GM12878 (cell line): ENCODE measurements at regions of chr12 and their contacts with region 1.

Region 1: GRCh38 chr12:9039397-9039977 is 50.1 kb downstream of the KLRG1 start:
- DNase-seq: no peak
- ATAC-seq: peak; percentile 78
- H3K4me3 ChIP-seq: no peak overlapping the region
- H3K27ac ChIP-seq: no peak overlapping the region
- H3K4me1 ChIP-seq: no peaks in the 10 kb centered on the region
- H3K27me3 ChIP-seq: no peaks in the 10 kb centered on the region
- CTCF ChIP-seq: peak; percentile 64 to 79 (median 74)
- EP300 ChIP-seq: no peak
- POLR2A ChIP-seq: no peak
- RAD21 ChIP-seq: peak; percentile 87

Region 2: GRCh38 chr12:8662593-8662992 is 376.9 kb before region 1 on chr12 and contains the start of gene MFAP5:
- CTCF ChIA-PET with region 1: interaction called, 9 read pairs
- POLR2A ChIA-PET with region 1: no interaction called
- RAD21 ChIA-PET with region 1: interaction called, 6 read pairs
- SMC1A ChIA-PET with region 1: interaction called, 7 read pairs
- in situ Hi-C with region 1: no loop called
- intact Hi-C with region 1: loop called (anchors 5 kb)
- DNase-seq: no peak
- ATAC-seq: no peak
- H3K4me3 ChIP-seq: no peak within 1 kb of the TSS
- H3K27ac ChIP-seq: no peak within 1 kb of the TSS
- H3K4me1 ChIP-seq: no peaks in the 10 kb centered on the region
- H3K27me3 ChIP-seq: peaks cover 0 to 5% of the 10 kb centered on the region in 2 experiments; a peak in 2 of 4 replicates
- CTCF ChIP-seq: no peak
- EP300 ChIP-seq: no peak
- POLR2A ChIP-seq: no peak
- RAD21 ChIP-seq: no peak
- polyA plus RNA-seq, gene MFAP5: not detected

Region 3: GRCh38 chr12:8675591-8676036 is 363.9 kb before region 1 on chr12:
- CTCF ChIA-PET with region 1: interaction called, 10 read pairs
- POLR2A ChIA-PET with region 1: no interaction called
- RAD21 ChIA-PET with region 1: interaction called, 7 read pairs
- SMC1A ChIA-PET with region 1: interaction called, 3 read pairs
- in situ Hi-C with region 1: no loop called
- intact Hi-C with region 1: no loop called
- DNase-seq: no peak
- ATAC-seq: peak; percentile 75
- H3K4me3 ChIP-seq: no peak overlapping the region
- H3K27ac ChIP-seq: no peak overlapping the region
- H3K4me1 ChIP-seq: no peaks in the 10 kb centered on the region
- H3K27me3 ChIP-seq: no peaks in the 10 kb centered on the region
- CTCF ChIP-seq: no peak
- EP300 ChIP-seq: peak in 1 of 2 experiments; percentile 65; a peak in 1 of 4 replicates
- POLR2A ChIP-seq: no peak
- RAD21 ChIP-seq: no peak

Region 4: DNA sequence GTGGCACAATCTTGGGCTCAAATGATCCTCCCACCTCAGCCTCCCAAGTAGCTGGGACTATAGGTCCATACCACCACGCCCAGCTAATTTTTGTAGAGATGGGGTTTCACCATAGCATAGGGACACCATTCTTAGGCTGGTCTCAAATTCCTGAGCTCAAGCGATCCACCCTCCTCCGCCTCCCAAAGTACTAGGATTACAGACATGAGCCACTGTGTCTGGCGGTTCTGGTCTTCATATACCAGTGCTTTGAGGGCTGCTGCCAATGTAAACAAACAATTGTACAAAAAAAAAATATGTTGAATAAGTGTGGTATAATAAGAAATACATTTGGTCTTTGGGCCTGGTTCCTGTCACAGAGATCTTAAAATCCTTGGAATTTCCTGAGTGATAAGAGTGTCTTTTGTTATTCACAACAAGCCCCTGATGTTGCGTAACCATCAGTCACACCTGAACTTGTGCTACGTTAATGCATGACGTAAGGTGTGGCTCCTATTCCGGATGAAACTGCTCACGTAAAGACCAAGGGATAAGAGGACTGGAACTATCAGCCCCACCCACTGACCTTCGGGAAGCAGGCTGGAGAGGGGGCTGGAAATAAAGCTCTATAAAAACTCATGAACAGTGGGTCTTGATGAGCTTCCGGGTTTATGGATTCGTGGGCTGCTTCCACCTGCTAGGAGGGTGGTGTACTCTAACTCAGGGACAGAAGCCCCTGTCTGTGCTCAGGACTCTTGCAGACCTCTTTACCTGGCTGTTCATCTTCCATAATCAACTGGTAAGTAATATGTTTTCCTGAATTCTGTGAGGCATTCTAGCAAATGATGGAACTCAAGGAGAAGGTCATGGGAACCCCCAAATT is 358.2 kb before region 1 on chr12:
- CTCF ChIA-PET with region 1: interaction called, 10 read pairs
- POLR2A ChIA-PET with region 1: no interaction called
- RAD21 ChIA-PET with region 1: interaction called, 7 read pairs
- SMC1A ChIA-PET with region 1: interaction called, 6 read pairs
- in situ Hi-C with region 1: no loop called
- intact Hi-C with region 1: loop called (anchors 1 kb)
- DNase-seq: no peak
- ATAC-seq: no peak
- H3K4me3 ChIP-seq: no peak overlapping the region
- H3K27ac ChIP-seq: no peak overlapping the region
- H3K4me1 ChIP-seq: no peaks in the 10 kb centered on the region
- H3K27me3 ChIP-seq: no peaks in the 10 kb centered on the region
- CTCF ChIP-seq: no peak
- EP300 ChIP-seq: no peak
- POLR2A ChIP-seq: no peak
- RAD21 ChIP-seq: no peak

Region 5: DNA sequence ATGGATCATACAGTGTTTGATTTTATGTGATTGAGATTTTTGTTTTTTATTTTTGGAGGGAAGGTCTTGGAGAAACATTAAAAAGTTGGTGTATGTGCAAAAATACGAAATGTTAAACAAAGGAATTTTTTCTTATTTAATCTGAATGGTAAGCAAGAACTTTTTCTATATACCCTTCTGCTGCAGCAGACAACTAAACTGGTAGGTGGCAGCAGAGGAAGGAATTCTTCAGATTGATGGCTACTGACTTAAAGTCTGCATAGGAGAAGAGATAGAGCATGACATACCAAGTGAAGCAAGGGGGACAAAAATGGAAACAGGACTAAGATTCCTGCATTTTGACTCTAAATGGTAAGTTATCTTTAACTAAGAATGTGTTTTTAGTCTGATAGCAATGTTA is 259.1 kb before region 1 on chr12:
- CTCF ChIA-PET with region 1: no interaction called
- POLR2A ChIA-PET with region 1: no interaction called
- RAD21 ChIA-PET with region 1: no interaction called
- SMC1A ChIA-PET with region 1: no interaction called
- in situ Hi-C with region 1: no loop called
- intact Hi-C with region 1: loop called (anchors 5 kb)
- DNase-seq: no peak
- ATAC-seq: 0 out of 3 replicates have a peak, but pooled peaks have one; percentile 42
- H3K4me3 ChIP-seq: no peak overlapping the region
- H3K27ac ChIP-seq: no peak overlapping the region
- H3K4me1 ChIP-seq: no peaks in the 10 kb centered on the region
- H3K27me3 ChIP-seq: no peaks in the 10 kb centered on the region; a peak in 1 of 4 replicates
- CTCF ChIP-seq: peak; percentile 19 to 25 (median 24); a peak in 2 of 6 replicates
- EP300 ChIP-seq: no peak
- POLR2A ChIP-seq: no peak
- RAD21 ChIP-seq: peak; percentile 40; the same call in 1 of the 2 replicates

Region 6: DNA sequence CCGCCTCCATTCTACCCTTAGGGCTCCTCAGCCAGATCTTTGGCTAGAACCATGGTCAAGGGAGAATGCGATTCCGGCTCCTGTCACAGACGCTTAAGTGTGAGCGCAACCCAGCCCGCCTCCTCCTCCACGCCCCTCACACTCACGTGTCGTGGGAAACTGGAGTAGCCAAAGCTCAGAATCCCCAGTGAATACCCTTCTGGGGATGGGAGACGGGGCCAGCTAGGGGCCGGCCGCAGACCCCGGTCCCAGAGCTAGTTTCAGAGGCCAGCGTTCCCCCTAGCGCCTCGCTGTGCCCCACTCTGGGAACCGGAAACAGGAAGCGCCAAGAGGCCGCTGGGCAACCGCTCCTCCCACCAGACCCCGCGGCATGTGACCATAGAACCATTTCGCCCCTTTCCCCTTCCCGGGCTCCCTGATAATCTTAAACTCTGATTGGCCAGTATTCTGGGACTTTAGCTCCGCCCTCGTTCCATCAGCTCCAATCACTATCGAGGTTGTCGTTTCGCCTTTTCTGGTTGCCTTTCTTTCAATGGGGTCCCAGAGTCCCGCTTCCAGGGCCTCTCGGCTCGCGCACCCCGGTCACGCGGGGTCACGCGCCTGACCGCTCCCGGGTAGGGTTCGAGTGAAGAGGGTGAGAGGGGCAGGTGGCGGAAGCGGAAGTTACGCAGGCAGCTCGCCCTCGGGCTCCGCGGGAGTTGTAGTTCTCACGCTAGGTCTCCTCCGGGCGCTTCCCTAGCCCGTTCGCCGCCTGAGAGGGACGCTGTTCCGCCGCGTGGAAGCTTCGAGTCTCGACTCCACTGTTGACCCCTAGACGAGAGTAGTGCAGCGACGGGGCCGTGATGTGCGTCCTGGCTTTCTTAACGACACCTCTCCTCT is 89.9 kb before region 1 on chr12 and contains the start of gene M6PR:
- CTCF ChIA-PET with region 1: interaction called, 30 read pairs
- POLR2A ChIA-PET with region 1: interaction called, 4 read pairs
- RAD21 ChIA-PET with region 1: interaction called, 23 read pairs
- SMC1A ChIA-PET with region 1: interaction called, 36 read pairs
- in situ Hi-C with region 1: loop called (anchors 5 kb)
- intact Hi-C with region 1: loop called (anchors 1 kb)
- DNase-seq: peak; percentile 94
- ATAC-seq: peak; percentile 90
- H3K4me3 ChIP-seq: peak within 1 kb of the TSS; percentile 86
- H3K27ac ChIP-seq: peak within 1 kb of the TSS; percentile 94
- H3K4me1 ChIP-seq: peaks cover 10% of the 10 kb centered on the region; the same call in 1 of the 2 replicates
- H3K27me3 ChIP-seq: no peaks in the 10 kb centered on the region
- CTCF ChIP-seq: peak; percentile 63 to 84 (median 71)
- EP300 ChIP-seq: 0 out of 4 replicates have a peak, but pooled peaks of 1 of the 2 experiments have one; percentile 39
- POLR2A ChIP-seq: peak; percentile 81
- RAD21 ChIP-seq: peak; percentile 67
- polyA plus RNA-seq, gene M6PR: 65.4 to 101 TPM

Region 7: DNA sequence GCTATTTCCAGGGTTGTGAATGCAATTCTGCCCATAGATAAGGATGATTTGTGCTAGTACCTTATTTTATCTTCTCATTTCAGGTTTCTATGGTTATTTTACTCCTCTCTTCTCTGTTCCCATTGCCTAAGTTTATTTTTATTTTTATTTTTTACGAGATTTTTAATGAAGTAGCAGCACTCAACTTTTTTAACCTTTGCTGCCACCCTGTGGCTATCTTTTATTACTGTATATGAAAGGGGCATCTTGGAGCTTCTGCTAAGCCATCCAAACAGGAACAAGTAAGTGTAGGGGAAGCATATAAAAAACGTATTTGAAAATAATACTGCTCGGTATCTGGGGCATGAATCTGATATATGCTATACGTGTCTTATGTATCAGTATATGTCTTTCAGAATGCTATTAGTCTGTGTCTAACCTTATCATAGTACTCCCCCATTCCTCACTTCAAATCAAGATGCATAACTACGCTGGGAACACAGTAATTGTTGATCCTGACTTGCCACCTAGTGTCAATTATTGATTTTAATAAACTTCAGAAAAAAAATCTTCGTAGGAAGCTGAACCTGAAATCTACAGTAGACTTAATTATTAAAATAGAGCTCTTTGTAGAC is 10.1 kb after region 1 on chr12:
- CTCF ChIA-PET with region 1: interaction called, 27 read pairs
- POLR2A ChIA-PET with region 1: no interaction called
- RAD21 ChIA-PET with region 1: interaction called, 4 read pairs
- SMC1A ChIA-PET with region 1: interaction called, 14 read pairs
- in situ Hi-C with region 1: no loop called
- intact Hi-C with region 1: no loop called
- DNase-seq: no peak
- ATAC-seq: peak; percentile 74
- H3K4me3 ChIP-seq: no peak overlapping the region
- H3K27ac ChIP-seq: no peak overlapping the region
- H3K4me1 ChIP-seq: no peaks in the 10 kb centered on the region
- H3K27me3 ChIP-seq: peaks cover 0 to 3% of the 10 kb centered on the region in 2 experiments; a peak in 2 of 4 replicates
- CTCF ChIP-seq: peak; percentile 34 to 53 (median 50)
- EP300 ChIP-seq: no peak
- POLR2A ChIP-seq: no peak
- RAD21 ChIP-seq: peak; percentile 61

Region 8: DNA sequence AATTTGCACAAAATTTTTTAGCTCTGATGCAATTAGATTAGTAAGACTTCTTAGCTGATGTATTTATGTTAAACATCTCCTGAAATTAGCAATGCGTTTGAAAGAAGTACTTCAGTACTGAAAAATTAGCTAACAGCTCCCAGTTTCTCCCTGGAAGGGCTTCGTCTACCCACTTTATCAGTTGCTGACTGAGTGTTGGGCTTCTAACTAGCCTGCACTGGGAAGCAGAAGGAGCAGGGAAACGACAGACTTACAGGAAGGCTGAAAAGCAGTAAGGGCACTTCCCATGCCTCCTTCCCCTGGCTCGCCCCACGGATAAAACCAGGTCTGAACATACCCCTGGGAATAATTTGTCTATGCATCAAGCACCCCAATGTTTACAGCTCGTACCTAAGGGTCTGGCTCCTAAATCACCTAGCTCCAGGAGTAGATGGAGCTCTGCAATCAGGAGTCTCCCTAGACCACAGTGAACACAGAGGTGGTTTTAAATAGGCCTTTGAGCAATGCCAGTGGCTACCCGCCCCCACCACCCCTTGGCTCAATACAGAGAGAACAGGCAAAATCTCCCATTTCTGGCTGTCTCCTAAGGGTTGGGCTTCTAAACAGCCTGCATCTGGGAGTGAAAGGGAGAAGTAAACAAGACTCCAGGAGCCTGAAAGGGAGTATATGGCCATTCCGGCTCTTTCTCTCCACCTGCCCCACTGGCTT is 52.6 kb after region 1 on chr12:
- CTCF ChIA-PET with region 1: no interaction called
- POLR2A ChIA-PET with region 1: no interaction called
- RAD21 ChIA-PET with region 1: no interaction called
- SMC1A ChIA-PET with region 1: no interaction called
- in situ Hi-C with region 1: no loop called
- intact Hi-C with region 1: no loop called
- DNase-seq: no peak
- ATAC-seq: no peak
- H3K4me3 ChIP-seq: no peak overlapping the region
- H3K27ac ChIP-seq: no peak overlapping the region
- H3K4me1 ChIP-seq: no peaks in the 10 kb centered on the region
- H3K27me3 ChIP-seq: no peaks in the 10 kb centered on the region; a peak in 2 of 4 replicates
- CTCF ChIP-seq: no peak
- EP300 ChIP-seq: no peak
- POLR2A ChIP-seq: no peak
- RAD21 ChIP-seq: no peak